ENCODE measurements at regions of chr15 and their contacts with region 1.

Region 1: DNA sequence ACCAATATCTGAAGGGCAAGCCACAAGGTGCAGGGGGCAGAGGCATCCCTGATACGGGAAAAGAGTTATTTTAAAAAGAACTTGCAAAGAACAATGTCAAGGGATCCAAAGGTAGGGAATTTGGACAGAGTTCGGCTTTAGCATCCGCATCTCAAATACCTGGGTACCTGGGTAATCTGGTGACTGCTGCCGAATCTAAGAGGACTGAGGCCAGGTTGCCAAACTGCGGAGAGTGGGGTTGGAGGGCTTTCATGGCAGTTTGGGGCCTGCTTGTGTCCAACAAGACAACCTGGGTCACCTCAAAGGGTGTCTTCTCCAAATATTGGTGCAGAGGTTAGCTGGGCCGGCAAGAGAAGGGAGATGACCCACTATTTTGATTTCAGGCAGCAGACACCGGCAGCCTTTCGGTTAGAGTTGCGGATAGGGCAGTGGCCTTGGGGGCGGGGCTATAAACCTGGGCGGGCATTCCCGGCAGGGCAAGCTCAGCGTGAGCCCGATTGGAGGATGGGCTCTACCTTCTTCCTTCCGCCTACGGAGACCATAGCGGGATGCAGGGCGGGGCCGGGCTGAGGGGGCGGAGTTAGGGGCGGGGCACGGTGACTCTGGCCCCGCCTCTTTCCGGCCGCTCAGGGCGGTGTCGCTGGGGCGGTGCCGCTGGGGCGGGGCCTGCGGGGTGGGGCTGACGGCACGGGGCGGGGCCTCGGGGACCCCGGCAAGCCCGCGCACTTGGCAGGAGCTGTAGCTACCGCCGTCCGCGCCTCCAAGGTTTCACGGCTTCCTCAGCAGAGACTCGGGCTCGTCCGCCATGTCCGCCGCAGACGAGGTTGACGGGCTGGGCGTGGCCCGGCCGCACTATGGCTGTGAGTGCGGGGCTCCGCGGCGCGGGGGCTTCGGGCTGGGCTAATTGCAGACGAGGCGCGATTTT is at the start of gene IQGAP1:
- DNase-seq: peak; percentile 92 to 97 (median 95)
- ATAC-seq: peak; percentile 91
- H3K4me3 ChIP-seq: peak within 1 kb of the TSS; percentile 90 to 94
- H3K4me3 Mint-ChIP-seq: peak within 1 kb of the TSS; percentile 90
- H3K27ac ChIP-seq: peak within 1 kb of the TSS; percentile 86 to 90
- H3K27ac Mint-ChIP-seq: peak within 1 kb of the TSS; percentile 96
- H3K4me1 ChIP-seq: peaks cover 44% of the 10 kb centered on the region
- H3K4me1 Mint-ChIP-seq: peaks cover 45% of the 10 kb centered on the region
- H3K27me3 ChIP-seq: no peaks in the 10 kb centered on the region
- H3K27me3 Mint-ChIP-seq: no peaks in the 10 kb centered on the region
- CTCF ChIP-seq: no peak
- total RNA-seq, gene IQGAP1: 57.4 to 69.5 TPM

Region 2: DNA sequence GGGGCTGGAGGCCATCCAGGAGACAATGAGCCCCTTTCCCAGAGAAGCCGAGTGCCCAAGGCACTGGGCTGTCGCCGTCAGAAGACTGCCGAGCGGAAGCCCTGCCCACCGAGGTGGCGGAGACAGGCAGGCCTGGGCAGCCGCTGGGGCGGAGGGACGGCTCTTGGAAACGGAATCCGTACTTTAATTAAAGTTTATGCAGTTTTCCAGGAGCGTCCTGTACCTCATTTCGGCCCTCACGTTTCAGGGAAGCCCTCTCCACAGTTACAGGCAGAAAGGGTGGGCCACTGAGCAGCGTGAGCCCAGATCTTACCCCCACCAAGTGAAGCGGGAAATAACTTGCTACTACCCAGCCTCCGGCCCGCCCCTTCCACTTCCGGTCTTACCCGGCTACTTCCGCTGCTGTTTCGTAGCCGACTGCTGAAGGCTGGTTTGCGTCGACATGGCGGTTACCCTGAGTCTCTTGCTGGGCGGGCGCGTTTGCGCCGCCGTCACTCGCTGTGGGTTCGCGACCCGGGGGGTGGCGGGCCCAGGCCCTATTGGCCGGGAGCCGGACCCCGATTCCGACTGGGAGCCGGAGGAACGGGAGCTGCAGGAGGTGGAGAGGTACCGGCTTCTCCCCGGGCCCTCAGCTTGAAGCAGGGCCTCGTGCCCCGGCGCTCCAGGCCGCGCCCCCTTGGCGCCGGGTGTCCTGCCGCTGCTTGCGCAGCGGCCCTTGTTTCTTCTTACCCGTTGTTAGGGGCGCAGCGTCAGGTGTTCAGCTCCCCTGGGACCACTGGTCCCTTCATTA is 122.3 kb before region 1 on chr15 and contains the start of gene NGRN:
- CTCF ChIA-PET with region 1: no interaction called
- POLR2A ChIA-PET with region 1: no interaction called
- intact Hi-C with region 1: loop called in 1 of 2 experiments (anchors 10 kb)
- DNase-seq: peak; percentile 84 to 95 (median 93)
- ATAC-seq: peak; percentile 81
- H3K4me3 ChIP-seq: peak within 1 kb of the TSS; percentile 79 to 86
- H3K4me3 Mint-ChIP-seq: peak within 1 kb of the TSS; percentile 94
- H3K27ac ChIP-seq: peak within 1 kb of the TSS; percentile 95 to 98
- H3K27ac Mint-ChIP-seq: peak within 1 kb of the TSS; percentile 98
- H3K4me1 ChIP-seq: peaks cover 43% of the 10 kb centered on the region
- H3K4me1 Mint-ChIP-seq: peaks cover 51% of the 10 kb centered on the region
- H3K27me3 ChIP-seq: no peaks in the 10 kb centered on the region
- H3K27me3 Mint-ChIP-seq: no peaks in the 10 kb centered on the region
- CTCF ChIP-seq: no peak
- total RNA-seq, gene NGRN: 57.8 to 62.0 TPM

Region 3: DNA sequence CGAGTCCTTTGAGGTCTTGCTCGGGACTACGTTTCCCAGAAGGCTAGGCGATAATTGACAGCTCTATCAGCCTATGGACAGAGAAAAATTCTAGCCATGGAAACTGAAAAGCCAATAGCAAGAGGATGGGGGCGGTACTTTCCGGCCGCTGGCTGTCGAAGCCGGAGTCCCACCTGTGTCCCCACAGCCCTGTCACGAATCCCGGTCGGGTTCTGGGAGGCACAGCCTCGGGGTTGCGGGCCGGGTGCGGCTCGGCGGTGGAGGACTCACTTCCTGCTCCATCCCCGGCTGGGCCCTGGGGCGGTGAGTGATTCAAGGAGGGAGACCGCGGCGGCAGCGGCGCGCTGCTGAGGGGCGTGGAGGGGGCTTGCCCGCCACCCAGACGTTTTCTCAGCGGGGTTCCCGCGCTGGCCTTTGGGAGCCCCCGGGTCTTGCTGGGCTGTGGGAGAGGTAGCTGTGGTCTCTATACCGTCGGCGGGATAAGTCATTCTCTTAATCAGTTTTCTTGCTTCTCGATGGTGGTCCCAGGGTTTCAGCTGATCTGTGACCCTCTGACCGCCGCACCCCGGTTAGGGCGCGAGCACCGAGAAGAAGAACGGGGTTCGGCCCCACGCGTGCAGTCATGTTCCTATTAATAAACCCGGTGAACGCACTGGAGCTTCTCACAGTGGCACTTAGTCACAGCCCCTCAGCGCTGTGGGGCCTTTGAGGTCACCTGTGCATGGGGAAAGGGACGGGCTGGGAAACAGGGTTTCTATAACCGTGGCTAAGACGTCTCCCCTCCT is 35.5 kb before region 1 on chr15 and contains the start of gene ZNF774:
- CTCF ChIA-PET with region 1: no interaction called
- POLR2A ChIA-PET with region 1: no interaction called
- intact Hi-C with region 1: loop called (anchors 1 kb)
- DNase-seq: peak; percentile 76 to 97 (median 89)
- ATAC-seq: peak; percentile 97
- H3K4me3 ChIP-seq: peak within 1 kb of the TSS; percentile 66 to 69
- H3K4me3 Mint-ChIP-seq: peak within 1 kb of the TSS; percentile 90
- H3K27ac ChIP-seq: peak within 1 kb of the TSS in 1 of 2 experiments; percentile 18
- H3K27ac Mint-ChIP-seq: peak within 1 kb of the TSS; percentile 79
- H3K4me1 ChIP-seq: peaks cover 5% of the 10 kb centered on the region
- H3K4me1 Mint-ChIP-seq: peaks cover 7% of the 10 kb centered on the region
- H3K27me3 ChIP-seq: no peaks in the 10 kb centered on the region
- H3K27me3 Mint-ChIP-seq: no peaks in the 10 kb centered on the region
- CTCF ChIP-seq: no peak
- total RNA-seq, gene ZNF774: 0.08 TPM in 1 of 2 experiments, not detected in the other

Region 4: DNA sequence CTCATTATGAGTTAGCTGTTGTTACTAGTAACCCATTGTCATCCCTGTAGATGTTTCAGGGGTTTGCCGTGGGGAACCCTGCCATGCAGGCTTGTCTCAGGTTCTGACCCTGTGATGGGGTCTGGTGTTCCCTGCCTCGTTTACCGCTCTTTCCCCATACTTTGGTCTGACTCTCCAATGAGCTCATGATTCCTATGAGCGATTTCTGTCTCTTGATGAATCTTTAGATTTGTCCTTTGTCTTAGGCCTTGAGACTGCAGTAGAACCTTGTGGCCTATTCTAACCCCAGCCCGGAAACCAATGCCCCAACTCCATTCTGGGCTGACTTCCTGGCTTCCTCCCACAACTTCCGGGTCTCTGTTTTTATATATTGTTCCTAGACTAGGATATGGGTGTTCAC is 11.0 kb before region 1 on chr15:
- CTCF ChIA-PET with region 1: no interaction called
- POLR2A ChIA-PET with region 1: interaction called, 28 read pairs
- intact Hi-C with region 1: loop called in 1 of 2 experiments (anchors 1 kb)
- DNase-seq: peak; percentile 38 to 87 (median 69)
- ATAC-seq: peak; percentile 97
- H3K4me3 ChIP-seq: peak overlapping the region in 1 of 2 experiments; percentile 12
- H3K4me3 Mint-ChIP-seq: peak overlapping the region; percentile 63
- H3K27ac ChIP-seq: peak overlapping the region in 1 of 2 experiments; percentile 62
- H3K27ac Mint-ChIP-seq: peak overlapping the region; percentile 12
- H3K4me1 ChIP-seq: peaks cover 40% of the 10 kb centered on the region
- H3K4me1 Mint-ChIP-seq: peaks cover 50% of the 10 kb centered on the region
- H3K27me3 ChIP-seq: no peaks in the 10 kb centered on the region
- H3K27me3 Mint-ChIP-seq: no peaks in the 10 kb centered on the region
- CTCF ChIP-seq: no peak

Region 5: GRCh38 chr15:90400406-90401314 is 12.9 kb after region 1 on chr15:
- CTCF ChIA-PET with region 1: no interaction called
- POLR2A ChIA-PET with region 1: interaction called, 27 read pairs
- intact Hi-C with region 1: loop called (anchors 1 kb)
- DNase-seq: peak; percentile 34 to 96 (median 64)
- ATAC-seq: peak; percentile 91
- H3K4me3 ChIP-seq: peak overlapping the region in 1 of 2 experiments; percentile 18
- H3K4me3 Mint-ChIP-seq: peak overlapping the region; percentile 69
- H3K27ac ChIP-seq: peak overlapping the region; percentile 74 to 96
- H3K27ac Mint-ChIP-seq: peak overlapping the region; percentile 96
- H3K4me1 ChIP-seq: peaks cover 36% of the 10 kb centered on the region
- H3K4me1 Mint-ChIP-seq: peaks cover 66% of the 10 kb centered on the region
- H3K27me3 ChIP-seq: no peaks in the 10 kb centered on the region
- H3K27me3 Mint-ChIP-seq: no peaks in the 10 kb centered on the region
- CTCF ChIP-seq: no peak

Region 6: DNA sequence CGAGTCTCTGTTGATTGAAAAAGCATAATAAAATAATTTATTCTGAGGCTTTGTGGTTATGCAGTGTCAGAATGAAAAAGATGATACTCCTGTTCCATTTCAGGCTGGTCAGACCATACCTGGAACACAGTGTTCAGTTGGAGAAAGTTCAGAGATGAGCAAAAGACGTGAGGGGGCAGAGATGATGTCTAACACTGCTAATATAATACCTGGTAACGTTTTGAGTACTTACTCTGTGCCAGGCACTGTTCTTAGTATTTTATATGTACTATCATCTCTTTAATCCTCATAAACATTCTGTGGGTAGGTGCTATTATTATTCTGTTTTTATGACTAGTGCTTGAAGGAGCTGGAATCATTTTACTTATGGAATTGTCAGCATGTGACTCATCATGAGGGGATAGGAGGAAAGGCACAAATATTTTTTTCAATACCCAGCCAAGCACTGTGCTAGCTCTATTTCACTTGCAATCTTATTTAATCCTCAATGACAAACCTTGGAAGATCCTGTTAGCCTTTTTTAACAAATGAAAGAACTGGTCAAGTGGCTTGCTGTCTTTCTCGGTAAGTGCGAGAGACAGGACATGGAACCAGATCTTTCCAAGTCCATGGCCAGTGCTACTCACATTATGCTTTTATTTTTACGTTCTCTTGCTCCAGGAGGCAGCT is 32.1 kb after region 1 on chr15:
- CTCF ChIA-PET with region 1: no interaction called
- POLR2A ChIA-PET with region 1: interaction called, 3 read pairs
- intact Hi-C with region 1: loop called in 1 of 2 experiments (anchors 5 kb)
- DNase-seq: no peak
- ATAC-seq: no peak
- H3K4me3 ChIP-seq: no peak overlapping the region
- H3K4me3 Mint-ChIP-seq: no peak overlapping the region
- H3K27ac ChIP-seq: no peak overlapping the region
- H3K27ac Mint-ChIP-seq: peak overlapping the region; percentile 15
- H3K4me1 ChIP-seq: peaks cover 34% of the 10 kb centered on the region
- H3K4me1 Mint-ChIP-seq: peaks cover 64% of the 10 kb centered on the region
- H3K27me3 ChIP-seq: no peaks in the 10 kb centered on the region
- H3K27me3 Mint-ChIP-seq: no peaks in the 10 kb centered on the region
- CTCF ChIP-seq: no peak

Region 7: DNA sequence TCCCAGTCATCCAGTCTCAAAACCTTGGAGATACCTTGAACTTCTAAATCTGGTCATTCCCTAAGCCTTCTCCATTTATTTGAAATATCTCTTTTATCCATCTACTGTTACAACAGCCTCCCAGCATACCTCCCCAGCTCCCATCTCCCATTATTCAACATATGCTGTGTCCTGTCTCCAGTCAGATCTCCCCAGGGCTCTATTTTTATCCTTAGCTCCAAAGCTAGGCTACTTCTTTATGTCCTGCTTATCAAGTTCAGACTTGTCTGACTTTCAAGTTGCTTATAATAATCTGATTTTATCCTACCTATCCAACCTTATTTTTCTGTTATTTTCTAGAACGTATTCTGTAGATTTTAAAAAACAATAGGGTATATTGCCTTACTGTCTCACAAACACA is 44.5 kb after region 1 on chr15:
- CTCF ChIA-PET with region 1: no interaction called
- POLR2A ChIA-PET with region 1: no interaction called
- intact Hi-C with region 1: loop called in 1 of 2 experiments (anchors 2 kb)
- DNase-seq: no peak
- ATAC-seq: no peak
- H3K4me3 ChIP-seq: no peak overlapping the region
- H3K4me3 Mint-ChIP-seq: no peak overlapping the region
- H3K27ac ChIP-seq: no peak overlapping the region
- H3K27ac Mint-ChIP-seq: no peak overlapping the region
- H3K4me1 ChIP-seq: no peaks in the 10 kb centered on the region
- H3K4me1 Mint-ChIP-seq: peaks cover 30% of the 10 kb centered on the region
- H3K27me3 ChIP-seq: no peaks in the 10 kb centered on the region
- H3K27me3 Mint-ChIP-seq: no peaks in the 10 kb centered on the region
- CTCF ChIP-seq: no peak

Measured in CD8-positive, alpha-beta T cell (primary cell).